ENCODE measurements at regions of chr10 and their contacts with region 1.

Region 1: DNA sequence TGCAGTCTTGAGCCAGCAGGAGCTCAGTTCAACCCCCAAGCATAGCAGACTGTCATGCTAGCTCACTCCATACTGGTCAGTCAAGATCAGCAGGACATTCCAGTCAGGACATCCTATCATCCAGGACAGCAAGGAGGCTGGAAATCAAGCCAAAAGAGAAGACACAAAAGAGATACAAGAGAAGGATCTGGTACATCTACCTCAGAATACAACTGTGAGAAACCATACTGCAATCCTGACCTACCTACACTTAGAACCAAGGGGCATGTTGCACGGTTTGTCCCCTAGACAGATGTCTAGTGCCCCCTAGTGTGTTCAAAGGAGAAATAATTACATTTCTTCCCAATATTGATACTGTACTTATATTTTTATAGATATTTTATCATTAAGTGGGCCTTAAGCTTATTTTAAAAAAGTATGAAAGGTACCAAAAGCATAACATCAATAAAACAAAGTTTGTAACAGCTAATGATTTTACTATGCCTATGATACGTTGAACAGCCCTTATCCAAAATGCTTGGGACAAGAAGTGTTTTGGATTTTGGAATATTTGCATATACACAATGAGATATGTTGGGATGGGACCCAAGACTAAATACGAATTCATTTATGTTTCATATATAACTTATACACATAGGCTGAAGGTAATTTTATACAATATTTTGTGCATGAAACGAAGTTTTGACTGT is 26.7 kb downstream of the ERCC6 start:
- DNase-seq: peak; percentile 19
- H3K4me3 Mint-ChIP-seq: no peak overlapping the region
- H3K27ac Mint-ChIP-seq: no peak overlapping the region
- H3K4me1 Mint-ChIP-seq: peaks cover 21% of the 10 kb centered on the region
- H3K27me3 Mint-ChIP-seq: peaks cover 3% of the 10 kb centered on the region

Region 2: DNA sequence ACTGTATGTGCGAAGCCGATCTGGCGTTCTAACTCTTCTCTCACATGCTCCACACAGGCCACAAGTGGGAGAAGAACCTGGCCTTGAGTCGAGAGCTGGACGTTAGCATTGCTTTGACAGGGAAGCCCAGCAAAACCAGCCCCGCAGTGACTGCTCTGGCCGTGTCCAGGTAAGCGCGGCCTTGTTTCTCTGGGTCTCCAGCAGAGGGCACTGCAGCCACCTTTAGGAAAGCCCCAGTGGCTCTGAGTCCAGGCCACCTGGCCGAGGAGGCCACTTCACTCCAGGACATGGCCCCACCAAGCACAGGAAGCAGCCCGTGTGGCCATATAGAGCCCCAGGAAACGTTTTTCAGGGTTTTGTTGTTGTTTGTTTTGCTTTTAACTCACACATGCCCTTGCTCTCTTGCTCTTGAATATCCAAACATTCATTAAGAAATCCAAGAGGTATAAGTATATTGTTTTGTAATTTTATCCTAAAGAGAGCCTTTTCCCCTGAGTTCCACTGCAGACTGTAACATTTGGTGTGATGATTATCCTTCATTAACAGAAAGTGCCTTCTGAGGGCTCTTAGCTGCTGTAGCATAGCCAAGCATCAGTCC is 530.9 kb before region 1 on chr10:
- CTCF ChIA-PET with region 1: no interaction called
- intact Hi-C with region 1: loop called (anchors 2 kb)
- DNase-seq: peak; percentile 45
- H3K4me3 Mint-ChIP-seq: no peak overlapping the region
- H3K27ac Mint-ChIP-seq: no peak overlapping the region
- H3K4me1 Mint-ChIP-seq: no peaks in the 10 kb centered on the region
- H3K27me3 Mint-ChIP-seq: no peaks in the 10 kb centered on the region

Region 3: DNA sequence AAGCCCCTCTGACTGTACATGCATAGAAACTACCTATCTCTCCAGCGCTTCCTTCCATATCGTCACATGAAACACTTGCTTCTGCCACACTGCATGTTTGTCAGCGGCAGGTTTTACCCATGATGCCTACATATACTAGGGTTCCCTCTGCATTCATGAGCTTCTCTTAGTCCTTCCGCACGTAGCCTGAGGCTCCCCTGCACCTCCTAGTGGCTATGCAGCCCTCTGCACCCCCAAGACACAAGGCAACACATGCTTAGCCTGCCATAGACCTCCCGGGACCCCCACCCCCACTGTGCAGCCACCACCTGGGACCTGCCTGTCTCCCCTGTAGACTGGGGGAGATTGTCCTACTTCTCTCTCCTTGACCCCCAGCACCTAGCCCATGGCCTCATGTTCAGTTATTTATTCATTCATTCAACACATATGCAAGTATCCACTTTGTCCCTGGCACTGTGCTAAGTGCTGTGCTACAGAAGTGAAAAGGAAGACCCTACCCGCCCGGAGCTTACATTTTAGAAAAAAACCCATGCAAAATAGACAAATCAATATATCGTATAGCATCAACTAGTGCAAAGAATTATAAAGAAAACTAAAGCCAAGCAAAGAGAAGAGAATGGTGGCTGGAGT is 347.6 kb before region 1 on chr10:
- CTCF ChIA-PET with region 1: no interaction called
- intact Hi-C with region 1: loop called (anchors 5 kb)
- DNase-seq: peak; percentile 46
- H3K4me3 Mint-ChIP-seq: no peak overlapping the region
- H3K27ac Mint-ChIP-seq: no peak overlapping the region
- H3K4me1 Mint-ChIP-seq: no peaks in the 10 kb centered on the region
- H3K27me3 Mint-ChIP-seq: no peaks in the 10 kb centered on the region

Region 4: DNA sequence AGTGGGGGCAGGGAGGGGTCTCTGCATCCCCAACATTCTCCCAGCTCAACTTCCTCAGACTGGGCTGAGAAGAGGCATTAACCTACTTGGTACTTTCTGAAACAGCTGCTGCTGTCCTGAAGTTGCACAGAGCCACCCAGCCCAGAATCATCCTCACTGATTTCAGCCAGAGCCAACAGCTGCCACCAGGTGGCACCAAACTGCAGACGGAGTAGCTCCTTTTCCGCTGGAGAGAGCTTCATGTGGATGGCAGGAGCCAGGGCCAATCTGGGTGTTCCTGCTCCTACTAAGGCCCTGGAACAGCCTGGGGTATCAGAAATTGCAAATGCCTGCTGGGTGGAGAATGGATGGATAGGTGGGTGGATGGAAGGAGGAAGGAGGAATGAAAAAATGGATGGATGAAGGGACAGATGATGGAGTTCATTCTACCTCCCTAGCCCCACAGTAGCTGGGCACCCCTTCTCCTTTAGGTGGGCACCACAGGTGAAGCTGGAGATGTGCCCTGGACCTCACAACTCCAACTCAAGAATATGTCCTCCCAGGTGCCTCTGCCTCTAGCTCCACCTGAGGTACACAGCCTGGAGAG is 104.6 kb before region 1 on chr10:
- CTCF ChIA-PET with region 1: interaction called, 66 read pairs
- intact Hi-C with region 1: loop called (anchors 1 kb)
- DNase-seq: peak; percentile 82
- H3K4me3 Mint-ChIP-seq: no peak overlapping the region
- H3K27ac Mint-ChIP-seq: no peak overlapping the region
- H3K4me1 Mint-ChIP-seq: no peaks in the 10 kb centered on the region
- H3K27me3 Mint-ChIP-seq: peaks cover 40% of the 10 kb centered on the region

Region 5: GRCh38 chr10:49538381-49539319 is 26.4 kb after region 1 on chr10 and contains the start of gene ERCC6:
- CTCF ChIA-PET with region 1: interaction called, 6 read pairs
- intact Hi-C with region 1: loop called (anchors 1 kb)
- DNase-seq: peak; percentile 97
- H3K4me3 Mint-ChIP-seq: peak within 1 kb of the TSS; percentile 90
- H3K27ac Mint-ChIP-seq: peak within 1 kb of the TSS; percentile 92
- H3K4me1 Mint-ChIP-seq: peaks cover 34% of the 10 kb centered on the region
- H3K27me3 Mint-ChIP-seq: peaks cover 14% of the 10 kb centered on the region
- total RNA-seq, gene ERCC6: 14.2 to 16.2 TPM